ENCODE measurements at regions of chr7 and their contacts with region 1.

Region 1: DNA sequence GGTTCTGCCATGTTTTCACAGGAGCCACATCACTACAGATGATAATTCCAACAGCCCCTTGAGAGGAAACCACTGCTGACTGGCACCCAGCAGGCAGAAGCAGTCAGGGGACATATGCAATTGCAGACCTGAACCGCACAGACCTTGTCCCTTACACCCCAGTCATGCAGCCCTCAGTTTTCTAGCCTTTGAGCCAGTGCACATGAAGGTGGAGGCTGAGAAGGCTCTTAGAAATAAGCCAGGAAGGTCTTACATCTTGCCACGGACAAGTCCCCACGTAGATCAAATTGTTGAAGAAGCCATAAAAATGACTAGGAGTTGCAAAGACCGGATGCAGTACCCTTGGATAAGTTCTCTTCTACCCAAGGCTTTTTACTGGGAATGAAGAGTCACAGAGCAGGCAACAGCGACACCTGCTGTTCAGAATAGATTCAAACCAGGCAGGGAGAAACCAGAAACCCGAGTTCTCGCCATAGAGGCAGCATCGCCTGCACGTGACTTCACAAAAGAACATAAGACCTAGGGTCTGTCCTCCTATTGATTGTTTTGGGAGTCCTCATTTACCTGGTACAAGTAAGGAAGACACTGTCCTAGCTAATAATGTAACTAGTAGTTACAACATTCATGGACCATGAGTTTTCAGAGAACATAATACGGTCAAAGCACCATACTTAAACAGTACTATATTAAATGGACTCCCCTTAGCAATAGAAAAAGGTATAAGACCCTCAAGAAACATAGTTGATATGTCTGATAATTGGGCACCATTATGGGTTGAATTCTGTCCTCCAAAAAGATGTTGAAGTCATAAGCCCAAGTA is 11.1 kb downstream of the STEAP1B start:
- DNase-seq: peak; percentile 44 to 95 (median 82)

Region 2: DNA sequence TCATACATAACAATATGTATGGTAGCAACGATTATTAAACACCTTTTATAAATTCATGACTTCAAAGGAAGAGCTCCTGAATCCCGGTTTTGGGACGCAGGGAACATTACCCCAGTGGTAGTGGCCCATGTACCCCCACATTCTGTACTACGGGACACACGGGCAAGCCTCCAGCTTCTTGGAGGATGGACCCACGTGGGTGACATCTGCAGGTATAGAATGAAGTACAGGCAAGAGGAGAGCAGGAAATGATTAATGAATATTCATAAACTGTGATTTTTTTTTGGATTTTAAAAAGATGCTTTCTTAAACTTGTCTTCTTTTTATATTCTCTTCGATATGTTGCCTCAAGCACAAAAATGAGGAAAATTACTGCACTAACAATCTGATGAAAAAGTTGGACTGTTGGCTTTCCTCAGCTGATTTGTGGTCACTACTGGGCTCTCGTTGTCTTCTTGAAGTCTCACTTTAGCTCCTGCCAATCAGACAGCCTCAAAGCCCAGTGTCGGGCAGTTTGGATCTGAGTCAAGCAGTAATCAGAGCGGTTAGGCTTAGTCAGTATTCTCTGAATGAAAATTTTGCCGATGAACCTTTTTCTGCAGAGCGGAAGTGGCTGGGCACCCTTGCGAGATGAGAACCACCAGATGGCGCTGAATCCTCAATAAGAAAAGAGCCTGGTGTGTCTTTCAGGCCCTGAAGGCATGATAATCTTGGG is 385.4 kb before region 1 on chr7:
- intact Hi-C with region 1: loop called (anchors 2 kb)
- DNase-seq: peak; percentile 53 to 95 (median 74)

Region 3: DNA sequence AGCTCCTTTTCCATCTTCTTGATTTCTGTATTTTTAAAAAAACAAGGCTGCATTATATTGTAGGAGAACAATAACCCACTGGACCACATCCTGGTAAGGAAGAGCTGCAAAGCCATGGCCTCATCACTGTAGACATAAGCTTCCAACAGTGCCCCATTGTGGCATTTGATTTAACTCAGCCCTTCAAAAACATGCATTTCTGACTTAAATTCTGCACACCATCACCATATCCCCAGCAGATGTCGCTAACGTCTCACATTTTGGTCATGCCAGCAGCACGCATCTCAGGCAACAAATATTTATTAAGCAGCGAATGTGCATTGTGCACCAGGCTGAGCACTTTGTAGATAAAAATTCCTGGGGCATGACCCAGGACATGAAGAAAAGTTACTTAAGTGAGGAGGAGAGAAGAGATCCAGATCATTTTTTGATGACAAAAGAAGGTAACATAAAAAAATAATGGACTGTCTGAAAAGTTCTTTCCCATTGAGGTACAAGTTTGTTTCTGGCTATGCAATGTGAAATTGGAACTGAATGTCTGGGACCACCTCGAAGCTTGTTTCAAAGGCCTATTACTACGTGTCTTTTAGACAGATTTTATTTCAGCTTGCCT is 378.5 kb before region 1 on chr7:
- intact Hi-C with region 1: loop called (anchors 1 kb)
- DNase-seq: peak in 8 of 10 donors; percentile 61 to 95 (median 81)

Region 4: GRCh38 chr7:22782616-22783232 is 293.9 kb after region 1 on chr7:
- intact Hi-C with region 1: no loop called
- DNase-seq: peak in 5 of 10 donors; percentile 15 to 73 (median 43)

Measured in posterior cingulate gyrus (tissue), 11 donors.